CD4-positive, alpha-beta T cell (primary cell): ENCODE measurements at regions of chr2 and their contacts with region 1.

Region 1: DNA sequence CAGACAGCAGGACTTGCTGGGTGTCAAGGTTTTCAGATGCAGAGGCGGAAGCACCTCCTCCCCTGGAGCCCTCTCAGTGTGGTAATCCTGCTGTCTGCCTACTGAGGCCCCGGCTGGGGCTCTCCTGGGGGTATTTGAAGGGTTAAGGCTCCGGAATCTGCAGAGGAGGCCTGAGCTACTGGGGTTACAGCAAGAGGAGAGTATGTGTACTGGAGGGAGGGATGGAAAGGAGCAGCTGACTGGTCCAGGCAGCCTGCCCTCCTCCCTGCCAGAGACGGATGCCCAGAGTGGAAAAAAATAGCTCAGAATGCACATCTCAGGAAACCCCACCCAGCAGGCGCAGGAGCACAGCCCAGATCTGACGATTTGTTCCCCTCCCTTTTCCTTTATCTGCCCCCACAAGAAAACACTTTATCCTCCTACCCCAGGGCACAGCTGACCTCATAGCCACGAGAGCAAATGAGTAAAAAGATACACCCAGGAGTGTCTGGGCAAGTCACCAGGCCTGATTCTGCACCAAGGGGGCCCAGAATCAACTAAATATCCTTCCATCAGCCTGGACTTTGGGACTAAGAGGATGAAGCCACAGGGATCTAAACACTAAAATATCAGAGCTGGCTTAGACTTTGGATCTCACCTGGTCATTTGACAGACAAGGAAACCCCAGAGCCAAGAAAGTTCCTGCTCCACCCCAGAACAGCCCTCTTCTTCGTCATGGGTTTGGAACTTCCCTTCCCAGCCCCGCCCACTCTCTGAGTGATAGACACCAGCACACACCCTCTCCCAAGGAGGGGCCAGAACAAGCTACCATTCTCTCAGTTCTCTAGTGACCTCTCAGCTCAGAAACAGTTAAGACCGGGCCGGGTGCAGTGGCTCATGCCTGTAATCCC is 5.5 kb downstream of the TMBIM1 start:
- DNase-seq: peak; percentile 49 to 96 (median 69)
- ATAC-seq: peak; percentile 58
- H3K4me3 ChIP-seq: peak overlapping the region; percentile 56
- H3K4me3 Mint-ChIP-seq: peak overlapping the region; percentile 91
- H3K27ac ChIP-seq: peak overlapping the region; percentile 95 to 98
- H3K27ac Mint-ChIP-seq: peak overlapping the region; percentile 99
- H3K4me1 ChIP-seq: peaks cover 100% of the 10 kb centered on the region
- H3K4me1 Mint-ChIP-seq: peaks cover 94% of the 10 kb centered on the region
- H3K27me3 ChIP-seq: no peaks in the 10 kb centered on the region
- H3K27me3 Mint-ChIP-seq: no peaks in the 10 kb centered on the region
- CTCF ChIP-seq: no peak

Region 2: GRCh38 chr2:216465580-216466197 is 1821.1 kb before region 1 on chr2:
- CTCF ChIA-PET with region 1: no interaction called
- POLR2A ChIA-PET with region 1: no interaction called
- intact Hi-C with region 1: no loop called
- DNase-seq: no peak
- ATAC-seq: no peak
- H3K4me3 ChIP-seq: no peak overlapping the region
- H3K4me3 Mint-ChIP-seq: no peak overlapping the region
- H3K27ac ChIP-seq: no peak overlapping the region
- H3K27ac Mint-ChIP-seq: no peak overlapping the region
- H3K4me1 ChIP-seq: no peaks in the 10 kb centered on the region
- H3K4me1 Mint-ChIP-seq: no peaks in the 10 kb centered on the region
- H3K27me3 ChIP-seq: no peaks in the 10 kb centered on the region
- H3K27me3 Mint-ChIP-seq: no peaks in the 10 kb centered on the region
- CTCF ChIP-seq: no peak

Region 3: DNA sequence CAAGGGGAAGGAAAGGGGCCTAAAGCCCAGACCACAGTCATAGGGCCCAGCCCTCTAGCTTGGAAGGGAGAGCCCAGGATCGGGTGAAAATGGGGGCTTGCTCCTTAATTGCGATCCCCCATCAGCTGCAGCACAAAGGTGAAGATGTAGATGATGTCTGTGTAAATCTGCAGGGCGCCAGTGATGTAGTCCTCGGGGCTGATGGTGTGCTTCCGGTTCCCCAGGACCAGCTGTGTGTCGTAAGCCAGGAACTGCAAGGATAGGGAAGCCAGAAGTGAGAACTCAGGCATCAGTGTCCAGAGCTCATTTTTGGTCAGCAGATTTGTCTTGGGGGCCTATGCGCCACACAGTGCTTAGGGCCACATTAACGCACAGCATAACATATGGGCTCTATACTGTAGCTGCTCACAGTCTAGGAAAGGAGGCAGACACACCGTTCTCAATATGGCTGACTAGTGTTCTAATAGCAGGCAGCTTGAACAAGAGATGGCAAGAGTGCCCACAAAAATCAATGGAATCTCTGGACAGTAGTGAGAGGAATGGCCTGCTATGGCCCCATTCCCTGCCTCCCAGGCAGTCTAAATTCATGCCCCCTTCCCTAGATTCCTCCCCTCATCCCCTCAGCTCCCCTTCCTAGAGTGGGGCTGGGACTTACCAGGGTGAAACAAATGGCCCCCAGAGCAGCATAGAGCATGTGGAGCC is 11.3 kb before region 1 on chr2:
- CTCF ChIA-PET with region 1: interaction called, 68 read pairs
- POLR2A ChIA-PET with region 1: interaction called, 221 read pairs
- intact Hi-C with region 1: loop called (anchors 1 kb)
- DNase-seq: peak in 1 of 14 experiments; percentile 23
- ATAC-seq: no peak
- H3K4me3 ChIP-seq: no peak overlapping the region
- H3K4me3 Mint-ChIP-seq: no peak overlapping the region
- H3K27ac ChIP-seq: peak overlapping the region; percentile 16 to 22
- H3K27ac Mint-ChIP-seq: peak overlapping the region; percentile 67
- H3K4me1 ChIP-seq: peaks cover 40% of the 10 kb centered on the region
- H3K4me1 Mint-ChIP-seq: peaks cover 49% of the 10 kb centered on the region
- H3K27me3 ChIP-seq: no peaks in the 10 kb centered on the region
- H3K27me3 Mint-ChIP-seq: no peaks in the 10 kb centered on the region
- CTCF ChIP-seq: no peak

Region 4: GRCh38 chr2:218438601-218438995 is 151.8 kb after region 1 on chr2:
- CTCF ChIA-PET with region 1: no interaction called
- POLR2A ChIA-PET with region 1: no interaction called
- intact Hi-C with region 1: no loop called
- DNase-seq: no peak
- ATAC-seq: no peak
- H3K4me3 ChIP-seq: no peak overlapping the region
- H3K4me3 Mint-ChIP-seq: no peak overlapping the region
- H3K27ac ChIP-seq: no peak overlapping the region
- H3K27ac Mint-ChIP-seq: no peak overlapping the region
- H3K4me1 ChIP-seq: no peaks in the 10 kb centered on the region
- H3K4me1 Mint-ChIP-seq: no peaks in the 10 kb centered on the region
- H3K27me3 ChIP-seq: no peaks in the 10 kb centered on the region
- H3K27me3 Mint-ChIP-seq: no peaks in the 10 kb centered on the region
- CTCF ChIP-seq: no peak

Region 5: GRCh38 chr2:218648088-218648786 is 361.4 kb after region 1 on chr2:
- CTCF ChIA-PET with region 1: no interaction called
- POLR2A ChIA-PET with region 1: no interaction called
- intact Hi-C with region 1: loop called in 1 of 2 experiments (anchors 10 kb)
- DNase-seq: peak; percentile 25 to 77 (median 42)
- ATAC-seq: peak; percentile 92
- H3K4me3 ChIP-seq: no peak overlapping the region
- H3K4me3 Mint-ChIP-seq: no peak overlapping the region
- H3K27ac ChIP-seq: no peak overlapping the region
- H3K27ac Mint-ChIP-seq: no peak overlapping the region
- H3K4me1 ChIP-seq: peaks cover 8% of the 10 kb centered on the region
- H3K4me1 Mint-ChIP-seq: peaks cover 6% of the 10 kb centered on the region
- H3K27me3 ChIP-seq: no peaks in the 10 kb centered on the region
- H3K27me3 Mint-ChIP-seq: no peaks in the 10 kb centered on the region
- CTCF ChIP-seq: peak; percentile 79

Region 6: GRCh38 chr2:219331560-219332213 is 1044.9 kb after region 1 on chr2:
- CTCF ChIA-PET with region 1: no interaction called
- POLR2A ChIA-PET with region 1: no interaction called
- intact Hi-C with region 1: no loop called
- DNase-seq: peak in 8 of 14 experiments; percentile 3 to 43 (median 18)
- ATAC-seq: peak; percentile 46
- H3K4me3 ChIP-seq: no peak overlapping the region
- H3K4me3 Mint-ChIP-seq: no peak overlapping the region
- H3K27ac ChIP-seq: no peak overlapping the region
- H3K27ac Mint-ChIP-seq: no peak overlapping the region
- H3K4me1 ChIP-seq: no peaks in the 10 kb centered on the region
- H3K4me1 Mint-ChIP-seq: no peaks in the 10 kb centered on the region
- H3K27me3 ChIP-seq: peaks cover 48 to 50% of the 10 kb centered on the region in 2 experiments
- H3K27me3 Mint-ChIP-seq: peaks cover 89% of the 10 kb centered on the region
- CTCF ChIP-seq: no peak